Esophagus muscularis mucosa (tissue), 4 donors: ENCODE measurements at regions of chr4 and their contacts with region 1.

Region 1: GRCh38 chr4:26860157-26860921 is at the start of gene STIM2:
- DNase-seq: peak; percentile 99
- H3K4me3 ChIP-seq: peak within 1 kb of the TSS; percentile 79 to 85 (median 82)
- H3K27ac ChIP-seq: peak within 1 kb of the TSS; percentile 95 to 96 (median 96)
- H3K4me1 ChIP-seq: peaks cover 26 to 52% (median 39%) of the 10 kb centered on the region in 4 donors
- H3K27me3 ChIP-seq: no peaks in the 10 kb centered on the region
- CTCF ChIP-seq: peak in 2 of 3 experiments; percentile 34 to 37
- EP300 ChIP-seq: no peak
- POLR2A ChIP-seq: peak; percentile 53
- total RNA-seq, gene STIM2: 9.6 to 12.2 (median 10.1) TPM

Region 2: DNA sequence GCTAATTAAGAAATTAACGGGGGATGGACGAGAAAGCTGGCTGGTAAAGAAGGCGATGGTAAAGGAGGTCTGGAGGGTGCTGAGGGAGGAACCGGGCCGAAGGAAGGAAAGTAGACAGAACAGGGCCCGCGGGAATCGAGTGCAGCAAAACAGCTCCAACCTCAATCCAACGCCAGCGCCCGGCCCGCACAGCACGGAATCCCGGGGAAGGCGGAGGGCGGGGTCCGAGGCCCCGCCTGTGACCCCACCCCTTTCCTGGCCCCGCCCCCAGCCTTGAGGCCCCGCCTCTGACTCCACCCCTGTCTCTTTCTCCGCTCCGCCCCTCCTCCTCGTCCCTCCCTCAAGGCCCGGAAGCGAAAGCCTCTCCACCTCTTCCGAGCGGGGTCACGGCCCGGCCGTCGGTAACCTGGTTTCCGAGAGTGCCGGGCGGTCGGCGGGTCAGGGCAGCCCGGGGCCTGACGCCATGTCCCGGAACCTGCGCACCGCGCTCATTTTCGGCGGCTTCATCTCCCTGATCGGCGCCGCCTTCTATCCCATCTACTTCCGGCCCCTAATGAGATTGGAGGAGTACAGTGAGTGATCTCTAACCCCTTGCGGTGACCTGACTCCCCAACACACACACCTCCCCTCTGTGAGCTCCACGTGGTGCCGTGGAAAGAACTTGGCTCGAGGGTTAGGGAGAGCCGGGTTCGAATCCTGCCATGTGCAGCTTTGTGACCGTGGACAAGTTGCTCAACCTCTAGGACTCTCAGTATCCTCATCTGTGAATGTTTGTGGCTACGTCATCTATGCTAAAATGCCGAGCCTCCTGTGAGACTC is 946.3 kb before region 1 on chr4 and contains the start of gene SMIM20:
- intact Hi-C with region 1: loop called (anchors 5 kb)
- DNase-seq: peak; percentile 97
- H3K4me3 ChIP-seq: peak within 1 kb of the TSS; percentile 72 to 87 (median 76)
- H3K27ac ChIP-seq: peak within 1 kb of the TSS; percentile 85 to 92 (median 88)
- H3K4me1 ChIP-seq: peaks cover 21 to 27% (median 22%) of the 10 kb centered on the region in 4 donors
- H3K27me3 ChIP-seq: no peaks in the 10 kb centered on the region
- CTCF ChIP-seq: no peak
- EP300 ChIP-seq: peak; percentile 46
- POLR2A ChIP-seq: no peak
- total RNA-seq, gene SMIM20: 24.0 to 33.2 (median 26.9) TPM

Region 3: DNA sequence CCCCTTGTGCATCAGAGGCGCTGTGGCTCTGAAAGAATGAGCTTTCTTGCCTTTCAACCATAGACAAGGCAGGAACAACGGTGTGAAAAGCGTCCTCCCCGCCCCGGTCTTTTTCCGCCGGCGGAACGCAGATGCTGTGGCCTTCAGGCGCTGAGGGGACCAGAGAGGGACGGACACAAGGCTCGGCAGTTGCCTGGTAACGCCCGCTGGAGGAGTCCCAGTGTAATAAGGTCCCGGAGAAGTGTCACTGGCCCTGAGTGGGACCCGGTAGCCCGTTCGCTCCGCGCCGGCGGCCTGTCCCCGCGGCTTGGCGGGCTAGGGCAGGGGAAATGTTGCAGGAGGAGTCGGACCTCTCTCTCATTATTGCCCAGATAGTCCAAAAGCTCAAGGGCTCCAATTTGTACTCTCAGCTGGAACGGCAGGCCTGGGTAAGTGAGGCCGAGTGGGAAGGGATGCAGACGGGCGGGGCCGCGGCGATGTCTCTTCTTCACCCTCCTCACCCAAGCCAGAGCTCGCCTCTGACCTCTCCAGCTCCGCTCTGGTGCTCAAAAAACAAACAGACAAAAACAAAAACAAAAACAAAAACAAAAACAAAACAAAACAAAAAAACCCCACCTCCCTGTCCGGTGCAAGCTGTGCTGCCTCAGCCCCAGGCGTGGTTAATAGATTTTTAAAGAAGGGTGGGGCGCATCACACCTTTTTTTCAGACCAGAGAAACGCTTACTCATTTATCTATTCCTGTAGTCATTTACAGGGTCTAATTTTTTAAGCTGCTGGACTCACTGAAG is 276.3 kb before region 1 on chr4 and contains the start of gene TBC1D19:
- intact Hi-C with region 1: loop called (anchors 10 kb)
- DNase-seq: peak; percentile 97
- H3K4me3 ChIP-seq: peak within 1 kb of the TSS; percentile 73 to 83 (median 82)
- H3K27ac ChIP-seq: peak within 1 kb of the TSS; percentile 68 to 84 (median 78)
- H3K4me1 ChIP-seq: peaks cover 8 to 23% (median 19%) of the 10 kb centered on the region in 4 donors
- H3K27me3 ChIP-seq: no peaks in the 10 kb centered on the region
- CTCF ChIP-seq: no peak
- EP300 ChIP-seq: no peak
- POLR2A ChIP-seq: no peak
- total RNA-seq, gene TBC1D19: 9.5 to 24.9 (median 11.2) TPM

Region 4: DNA sequence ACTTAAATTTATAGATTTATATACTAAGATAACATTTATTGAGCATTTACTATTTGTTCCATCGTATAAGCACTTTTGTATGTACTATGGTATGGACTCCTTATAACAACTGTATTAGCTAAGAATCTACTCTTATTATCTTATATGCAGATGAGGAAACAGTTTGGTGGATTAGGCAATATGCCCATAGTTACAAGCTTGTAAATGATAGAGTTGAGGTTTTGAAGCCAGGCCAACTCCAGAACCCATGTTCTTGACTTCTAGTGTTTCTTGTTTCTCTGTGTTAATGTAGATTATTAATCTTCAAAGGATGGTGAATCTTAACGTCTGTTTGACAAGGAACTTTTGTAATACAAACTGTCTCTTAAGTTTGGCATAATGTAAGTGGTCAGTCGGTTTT is 71.6 kb after region 1 on chr4:
- intact Hi-C with region 1: no loop called
- DNase-seq: no peak
- H3K4me3 ChIP-seq: no peak overlapping the region
- H3K27ac ChIP-seq: no peak overlapping the region
- H3K4me1 ChIP-seq: no peaks in the 10 kb centered on the region
- H3K27me3 ChIP-seq: no peaks in the 10 kb centered on the region
- CTCF ChIP-seq: no peak
- EP300 ChIP-seq: no peak
- POLR2A ChIP-seq: no peak

Region 5: GRCh38 chr4:27010334-27010940 is 150.1 kb after region 1 on chr4:
- intact Hi-C with region 1: loop called (anchors 2 kb)
- DNase-seq: no peak
- H3K4me3 ChIP-seq: no peak overlapping the region
- H3K27ac ChIP-seq: no peak overlapping the region
- H3K4me1 ChIP-seq: peaks cover 0 to 21% (median 12%) of the 10 kb centered on the region in 4 donors
- H3K27me3 ChIP-seq: no peaks in the 10 kb centered on the region
- CTCF ChIP-seq: peak; percentile 87 to 92 (median 88)
- EP300 ChIP-seq: no peak
- POLR2A ChIP-seq: no peak